Activated T-helper 1 cell treated with anti-CD3 and anti-CD28 coated beads, Interleukin-12 subunit alpha, Interleukin-12 subunit beta, Interleukin-2, Interleukin-4 antibody, amounts not matched to agents 30 ng/mL and 10 ng/mL and 1 ng/mL, durations not matched to agents 14 hours and 24 hours and 36 hours (primary cell): ENCODE measurements at regions of chr2 and their contacts with region 1.

Region 1: DNA sequence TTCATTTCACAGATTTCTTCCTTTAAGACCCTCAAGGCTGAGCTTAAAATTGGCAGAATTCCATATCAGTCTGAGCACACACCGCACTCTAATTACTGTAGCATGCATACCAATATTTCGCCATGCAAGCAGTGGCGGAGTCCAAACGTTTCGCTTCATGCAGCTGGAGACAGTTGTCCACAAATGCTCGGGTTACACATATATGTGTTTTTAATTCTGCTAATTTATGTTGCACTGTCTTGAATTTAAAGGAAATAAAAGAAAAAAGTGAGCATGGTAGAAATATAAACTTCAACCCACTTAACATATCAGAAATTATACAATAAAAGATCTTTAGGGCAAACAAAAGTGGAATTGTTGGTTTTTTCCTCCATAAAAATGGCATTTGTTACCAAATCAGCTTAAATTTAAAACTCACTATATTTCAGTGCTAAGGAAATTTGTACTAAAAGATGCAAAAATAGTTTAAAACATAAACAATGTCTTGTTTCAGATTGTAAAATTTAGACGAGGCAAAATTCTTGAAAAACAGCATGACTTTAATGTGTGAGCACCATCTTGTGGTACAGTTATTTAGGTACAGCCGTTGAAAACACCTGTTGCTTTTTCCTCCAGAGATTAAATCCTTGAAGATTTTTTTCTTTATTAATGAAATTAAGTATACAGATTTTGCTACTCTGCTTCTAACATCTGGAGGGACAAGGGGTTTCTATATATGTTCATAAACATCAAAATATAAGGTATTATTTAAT is 24.1 kb upstream of the KANSL1L start:
- DNase-seq: no peak
- H3K4me3 Mint-ChIP-seq: no peak overlapping the region
- H3K27ac Mint-ChIP-seq: no peak overlapping the region
- H3K4me1 Mint-ChIP-seq: peaks cover 6% of the 10 kb centered on the region
- H3K27me3 Mint-ChIP-seq: peaks cover 14% of the 10 kb centered on the region

Region 2: GRCh38 chr2:208466151-208466919 is 1728.9 kb before region 1 on chr2:
- intact Hi-C with region 1: loop called (anchors 2 kb)
- DNase-seq: no peak
- H3K4me3 Mint-ChIP-seq: no peak overlapping the region
- H3K27ac Mint-ChIP-seq: no peak overlapping the region
- H3K4me1 Mint-ChIP-seq: no peaks in the 10 kb centered on the region
- H3K27me3 Mint-ChIP-seq: no peaks in the 10 kb centered on the region

Region 3: DNA sequence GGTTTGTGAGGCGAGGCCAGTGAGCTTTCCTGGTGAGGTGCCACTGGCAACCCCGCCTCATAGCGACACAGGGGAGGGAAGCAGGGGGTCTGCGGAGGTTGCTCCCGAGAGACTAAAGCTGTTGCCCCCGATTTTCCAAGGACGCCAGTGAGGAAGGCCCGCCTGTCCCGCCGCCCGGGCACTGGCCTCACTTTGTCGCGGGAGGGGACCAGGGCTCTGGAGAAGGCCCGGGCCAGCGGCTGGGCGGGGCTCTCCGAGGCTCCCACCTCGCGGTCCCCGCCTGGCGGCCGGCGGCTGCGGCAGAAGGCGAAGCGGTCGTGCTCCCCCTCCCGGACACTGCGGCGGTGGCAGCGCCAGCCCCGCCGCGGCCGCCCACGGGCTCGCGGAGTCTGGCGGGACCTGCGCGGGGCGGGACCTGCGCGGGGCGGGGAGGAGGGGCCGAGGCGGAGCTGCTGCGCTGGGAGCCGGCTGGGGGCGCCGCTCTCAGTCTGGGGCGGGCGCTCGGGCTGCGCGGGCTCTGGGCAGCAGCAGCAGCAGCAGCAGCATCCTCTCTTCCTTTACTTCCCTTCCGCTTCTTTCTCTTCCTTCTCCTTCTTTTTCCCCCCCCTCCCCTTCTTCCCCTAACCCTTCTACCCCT is 771.6 kb before region 1 on chr2 and contains the start of gene MAP2:
- intact Hi-C with region 1: loop called (anchors 2 kb)
- DNase-seq: peak; percentile 63
- H3K4me3 Mint-ChIP-seq: peak within 1 kb of the TSS; percentile 76
- H3K27ac Mint-ChIP-seq: no peak within 1 kb of the TSS
- H3K4me1 Mint-ChIP-seq: peaks cover 14% of the 10 kb centered on the region
- H3K27me3 Mint-ChIP-seq: peaks cover 20% of the 10 kb centered on the region
- total RNA-seq, gene MAP2: not detected in 2 replicates

Region 4: GRCh38 chr2:209977386-209978239 is 217.7 kb before region 1 on chr2:
- intact Hi-C with region 1: loop called (anchors 1 kb)
- DNase-seq: no peak
- H3K4me3 Mint-ChIP-seq: no peak overlapping the region
- H3K27ac Mint-ChIP-seq: no peak overlapping the region
- H3K4me1 Mint-ChIP-seq: no peaks in the 10 kb centered on the region
- H3K27me3 Mint-ChIP-seq: peaks cover 12% of the 10 kb centered on the region

Region 5: GRCh38 chr2:210262036-210262435 is 66.8 kb after region 1 on chr2:
- intact Hi-C with region 1: no loop called
- DNase-seq: no peak
- H3K4me3 Mint-ChIP-seq: no peak overlapping the region
- H3K27ac Mint-ChIP-seq: no peak overlapping the region
- H3K4me1 Mint-ChIP-seq: no peaks in the 10 kb centered on the region
- H3K27me3 Mint-ChIP-seq: peaks cover 2% of the 10 kb centered on the region

Region 6: GRCh38 chr2:210917465-210917864 is 722.2 kb after region 1 on chr2:
- intact Hi-C with region 1: no loop called
- DNase-seq: no peak
- H3K4me3 Mint-ChIP-seq: no peak overlapping the region
- H3K27ac Mint-ChIP-seq: no peak overlapping the region
- H3K4me1 Mint-ChIP-seq: no peaks in the 10 kb centered on the region
- H3K27me3 Mint-ChIP-seq: no peaks in the 10 kb centered on the region